Ascending aorta (tissue), 2 donors: ENCODE measurements at regions of chr19 and their contacts with region 1.

Region 1: GRCh38 chr19:11137542-11138384 is 17.8 kb downstream of the SPC24 start:
- DNase-seq: peak; percentile 25 to 91
- H3K4me3 ChIP-seq: peak overlapping the region; percentile 24 to 55
- H3K27ac ChIP-seq: peak overlapping the region; percentile 97
- H3K4me1 ChIP-seq: peaks cover 33 to 43% of the 10 kb centered on the region in 2 donors
- H3K27me3 ChIP-seq: no peaks in the 10 kb centered on the region
- CTCF ChIP-seq: peak; percentile 80 to 95 (median 93)

Region 2: DNA sequence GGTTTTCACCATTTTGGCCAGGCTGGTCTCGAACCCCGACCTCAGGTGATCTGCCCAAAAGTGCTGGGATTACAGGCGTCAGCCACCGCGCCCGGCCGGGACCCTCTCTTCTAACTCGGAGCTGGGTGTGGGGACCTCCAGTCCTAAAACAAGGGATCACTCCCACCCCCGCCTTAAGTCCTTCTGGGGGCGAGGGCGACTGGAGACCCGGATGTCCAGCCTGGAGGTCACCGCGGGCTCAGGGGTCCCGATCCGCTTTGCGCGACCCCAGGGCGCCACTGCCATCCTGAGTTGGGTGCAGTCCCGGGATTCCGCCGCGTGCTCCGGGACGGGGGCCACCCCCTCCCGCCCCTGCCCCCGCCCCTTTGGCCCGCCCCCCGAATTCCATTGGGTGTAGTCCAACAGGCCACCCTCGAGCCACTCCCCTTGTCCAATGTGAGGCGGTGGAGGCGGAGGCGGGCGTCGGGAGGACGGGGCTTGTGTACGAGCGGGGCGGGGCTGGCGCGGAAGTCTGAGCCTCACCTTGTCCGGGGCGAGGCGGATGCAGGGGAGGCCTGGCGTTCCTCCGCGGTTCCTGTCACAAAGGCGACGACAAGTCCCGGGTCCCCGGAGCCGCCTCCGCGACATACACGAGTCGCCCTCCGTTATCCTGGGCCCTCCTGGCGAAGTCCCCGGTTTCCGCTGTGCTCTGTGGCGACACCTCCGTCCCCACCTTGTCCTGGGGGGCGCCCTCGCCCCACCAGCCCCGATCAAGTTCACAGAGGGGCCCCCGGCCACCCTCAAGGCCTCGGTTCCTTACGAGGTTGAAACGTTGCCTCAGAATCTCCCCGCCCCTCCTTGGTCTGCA is 47.5 kb before region 1 on chr19:
- intact Hi-C with region 1: loop called (anchors 2 kb)
- DNase-seq: peak; percentile 96 to 99
- H3K4me3 ChIP-seq: peak overlapping the region; percentile 45 to 82
- H3K27ac ChIP-seq: peak overlapping the region; percentile 98 to 99
- H3K4me1 ChIP-seq: peaks cover 15 to 45% of the 10 kb centered on the region in 2 donors
- H3K27me3 ChIP-seq: no peaks in the 10 kb centered on the region
- CTCF ChIP-seq: peak in 2 of 3 experiments; percentile 16

Region 3: GRCh38 chr19:11155373-11156120 is 17.8 kb after region 1 on chr19 and contains the start of gene SPC24:
- intact Hi-C with region 1: loop called (anchors 1 kb)
- DNase-seq: peak; percentile 83 to 97
- H3K4me3 ChIP-seq: peak within 1 kb of the TSS; percentile 47 to 68
- H3K27ac ChIP-seq: peak within 1 kb of the TSS; percentile 80 to 82
- H3K4me1 ChIP-seq: peaks cover 11 to 51% of the 10 kb centered on the region in 2 donors
- H3K27me3 ChIP-seq: no peaks in the 10 kb centered on the region
- CTCF ChIP-seq: no peak
- total RNA-seq, gene SPC24: 1.1 TPM

Region 4: DNA sequence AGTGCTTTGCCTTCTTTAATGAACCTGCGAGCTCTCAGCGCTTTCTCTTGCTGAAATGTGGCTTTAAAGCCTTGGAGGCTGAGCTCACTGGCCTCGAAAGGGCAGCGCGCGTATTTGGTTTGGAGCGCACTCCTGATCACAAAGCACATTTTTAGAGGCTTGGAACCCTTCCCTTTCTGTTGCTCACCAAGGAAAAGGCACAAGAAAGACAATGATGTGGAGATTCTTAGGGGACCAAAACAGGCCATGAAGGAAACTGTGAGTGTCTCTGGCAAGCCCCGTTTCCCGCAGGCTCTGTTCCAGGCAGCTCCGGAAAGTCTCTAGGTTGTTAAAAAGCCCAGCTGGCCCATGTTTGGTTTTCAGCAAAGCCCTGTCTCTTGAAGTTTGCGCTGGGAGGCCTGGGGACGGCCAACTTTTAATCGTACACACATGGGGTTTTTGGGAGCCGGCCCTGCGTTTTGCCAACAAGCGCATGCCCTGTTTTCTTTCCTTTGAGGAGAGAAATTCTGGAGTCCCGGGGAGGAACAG is 27.2 kb after region 1 on chr19:
- intact Hi-C with region 1: loop called (anchors 1 kb)
- DNase-seq: peak; percentile 52 to 97
- H3K4me3 ChIP-seq: peak overlapping the region in 1 of 2 donors; percentile 52
- H3K27ac ChIP-seq: peak overlapping the region; percentile 94
- H3K4me1 ChIP-seq: peaks cover 30 to 62% of the 10 kb centered on the region in 2 donors
- H3K27me3 ChIP-seq: no peaks in the 10 kb centered on the region
- CTCF ChIP-seq: peak in 1 of 3 experiments; percentile 16

Region 5: DNA sequence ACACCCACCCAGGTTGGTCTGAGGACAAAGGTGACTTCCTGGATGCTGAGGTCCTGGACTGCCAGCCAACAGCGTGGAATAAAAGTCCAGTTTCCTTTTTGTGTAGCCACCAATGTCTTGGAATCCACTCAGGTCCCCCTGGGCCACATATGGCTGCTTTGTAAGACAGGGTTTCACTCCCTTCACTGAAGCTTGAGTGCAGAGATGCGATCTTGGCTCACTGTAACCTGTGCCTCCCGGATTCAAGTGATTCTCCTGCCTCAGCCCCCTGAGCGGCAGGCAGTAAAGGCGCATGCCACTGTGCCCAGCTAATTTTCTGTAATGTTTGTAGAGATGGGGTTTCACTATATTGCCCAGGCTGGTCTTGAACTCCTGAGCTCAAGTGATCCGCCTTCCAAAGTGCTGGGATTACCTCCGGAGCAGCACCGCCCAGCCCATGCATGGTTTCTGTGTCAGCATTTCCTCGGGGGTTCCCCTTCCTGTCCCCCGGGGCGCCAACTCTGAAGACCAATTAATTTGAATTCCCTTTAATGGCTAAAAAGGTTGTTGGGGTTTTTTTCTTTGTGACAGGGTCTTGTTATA is 42.0 kb after region 1 on chr19:
- intact Hi-C with region 1: no loop called
- DNase-seq: no peak
- H3K4me3 ChIP-seq: peak overlapping the region in 1 of 2 donors; percentile 37
- H3K27ac ChIP-seq: peak overlapping the region; percentile 82 to 83
- H3K4me1 ChIP-seq: peaks cover 17 to 40% of the 10 kb centered on the region in 2 donors
- H3K27me3 ChIP-seq: no peaks in the 10 kb centered on the region
- CTCF ChIP-seq: no peak

Region 6: GRCh38 chr19:11197264-11198174 is 59.8 kb after region 1 on chr19 and contains the start of gene KANK2:
- intact Hi-C with region 1: loop called (anchors 2 kb)
- DNase-seq: peak; percentile 39 to 88
- H3K4me3 ChIP-seq: peak within 1 kb of the TSS; percentile 67
- H3K27ac ChIP-seq: peak within 1 kb of the TSS; percentile 83 to 89
- H3K4me1 ChIP-seq: peaks cover 22 to 33% of the 10 kb centered on the region in 2 donors
- H3K27me3 ChIP-seq: no peaks in the 10 kb centered on the region
- CTCF ChIP-seq: no peak
- total RNA-seq, gene KANK2: 572 TPM

Region 7: DNA sequence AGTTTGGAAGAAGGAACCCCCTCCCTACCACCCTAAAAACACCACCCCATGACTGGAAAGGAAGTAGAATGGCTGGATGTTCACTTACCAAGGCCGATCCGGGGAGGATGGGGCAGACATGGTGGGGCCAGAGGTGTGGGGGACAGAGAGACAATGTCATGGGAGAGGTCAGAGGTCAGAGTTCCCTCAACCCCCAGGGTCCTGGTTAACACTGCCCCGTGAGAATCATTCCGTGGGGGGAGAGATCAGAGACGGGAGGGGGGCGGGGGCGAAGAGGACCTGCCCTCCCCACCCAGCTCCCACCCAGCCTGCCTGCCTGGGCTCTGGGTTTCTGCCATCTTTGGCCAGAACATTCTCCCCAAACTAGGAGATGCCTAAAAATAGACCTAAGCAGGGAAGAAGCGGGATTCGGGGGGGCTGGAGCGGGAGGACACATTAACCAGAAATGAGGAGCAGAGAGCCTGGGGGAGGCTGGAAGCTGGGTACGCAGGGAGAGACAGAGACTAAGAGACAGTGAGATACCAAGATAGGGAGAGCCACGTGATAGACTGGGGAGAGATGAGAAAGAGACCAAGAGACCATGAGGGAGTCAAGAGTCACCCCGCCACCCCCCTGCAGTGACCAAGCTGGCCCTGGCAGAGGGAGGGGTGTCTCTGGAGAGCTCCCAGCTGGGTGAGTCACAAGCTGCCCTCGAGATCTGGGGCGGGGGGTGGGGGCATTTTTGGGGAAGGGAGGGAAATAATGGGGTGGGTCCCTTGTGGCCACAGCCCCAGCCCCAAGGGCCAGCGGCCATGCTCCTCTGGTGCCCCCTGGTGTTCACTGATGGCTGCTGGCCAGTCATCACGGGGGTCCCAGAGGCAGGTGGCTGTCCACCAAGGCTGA is 65.7 kb after region 1 on chr19:
- intact Hi-C with region 1: loop called (anchors 1 kb)
- DNase-seq: peak; percentile 70 to 95
- H3K4me3 ChIP-seq: peak overlapping the region in 1 of 2 donors; percentile 14
- H3K27ac ChIP-seq: peak overlapping the region; percentile 93 to 94
- H3K4me1 ChIP-seq: peaks cover 10 to 24% of the 10 kb centered on the region in 2 donors
- H3K27me3 ChIP-seq: no peaks in the 10 kb centered on the region
- CTCF ChIP-seq: peak; percentile 91 to 99 (median 94)